Heart left ventricle (tissue), 16 donors: ENCODE measurements at regions of chr17 and their contacts with region 1.

Region 1: DNA sequence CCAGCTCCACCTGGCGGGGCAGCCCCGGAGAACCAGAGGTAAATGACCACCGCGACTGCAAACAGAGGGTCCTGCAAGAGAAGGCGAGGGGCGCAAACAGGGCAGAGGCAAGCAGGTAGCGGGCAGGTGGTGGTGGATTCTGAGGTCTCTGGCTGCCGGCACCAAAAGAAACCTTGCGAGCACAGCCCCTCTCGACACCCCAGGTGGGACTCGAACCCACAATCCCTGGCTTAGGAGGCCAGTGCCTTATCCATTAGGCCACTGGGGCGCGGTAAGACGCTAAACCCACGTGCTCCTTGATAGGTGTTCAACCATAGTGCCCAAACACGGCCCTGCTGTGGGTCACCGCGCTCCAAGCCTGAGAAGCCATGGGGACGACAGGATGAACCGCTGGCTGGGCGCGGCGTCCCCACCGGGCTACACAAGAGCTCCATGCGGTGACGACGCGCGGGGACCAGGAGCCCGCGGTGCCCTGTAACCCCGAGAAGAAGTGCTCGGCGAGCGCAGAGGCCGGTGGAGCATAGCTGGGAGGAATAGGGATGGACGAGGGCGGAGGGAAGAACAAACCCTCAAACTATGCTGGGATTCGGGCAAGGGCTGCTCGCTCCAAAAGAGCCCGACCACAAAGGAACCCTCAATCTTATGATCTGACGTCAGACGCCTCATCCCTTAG is 12.4 kb downstream of the ATP5PD start:
- DNase-seq: peak; percentile 84 to 90 (median 88)
- ATAC-seq: peak; percentile 69 to 79 (median 75)
- H3K4me3 ChIP-seq: peak overlapping the region; percentile 47 to 83 (median 68)
- H3K27ac ChIP-seq: peak overlapping the region; percentile 69 to 96 (median 86)
- H3K4me1 ChIP-seq: peaks cover 0 to 50% (median 31%) of the 10 kb centered on the region in 12 donors
- H3K27me3 ChIP-seq: no peaks in the 10 kb centered on the region
- CTCF ChIP-seq: peak in 2 of 12 donors; percentile 6 to 15
- POLR2A ChIP-seq: no peak

Region 2: GRCh38 chr17:74815550-74816370 is 218.6 kb before region 1 on chr17:
- intact Hi-C with region 1: loop called in 1 of 10 experiments (anchors 10 kb)
- DNase-seq: no peak
- ATAC-seq: no peak
- H3K4me3 ChIP-seq: no peak overlapping the region
- H3K27ac ChIP-seq: no peak overlapping the region
- H3K4me1 ChIP-seq: peaks cover 0 to 35% (median 14%) of the 10 kb centered on the region in 12 donors
- H3K27me3 ChIP-seq: no peaks in the 10 kb centered on the region
- CTCF ChIP-seq: peak in 2 of 12 donors; percentile 5 to 8
- POLR2A ChIP-seq: no peak

Region 3: DNA sequence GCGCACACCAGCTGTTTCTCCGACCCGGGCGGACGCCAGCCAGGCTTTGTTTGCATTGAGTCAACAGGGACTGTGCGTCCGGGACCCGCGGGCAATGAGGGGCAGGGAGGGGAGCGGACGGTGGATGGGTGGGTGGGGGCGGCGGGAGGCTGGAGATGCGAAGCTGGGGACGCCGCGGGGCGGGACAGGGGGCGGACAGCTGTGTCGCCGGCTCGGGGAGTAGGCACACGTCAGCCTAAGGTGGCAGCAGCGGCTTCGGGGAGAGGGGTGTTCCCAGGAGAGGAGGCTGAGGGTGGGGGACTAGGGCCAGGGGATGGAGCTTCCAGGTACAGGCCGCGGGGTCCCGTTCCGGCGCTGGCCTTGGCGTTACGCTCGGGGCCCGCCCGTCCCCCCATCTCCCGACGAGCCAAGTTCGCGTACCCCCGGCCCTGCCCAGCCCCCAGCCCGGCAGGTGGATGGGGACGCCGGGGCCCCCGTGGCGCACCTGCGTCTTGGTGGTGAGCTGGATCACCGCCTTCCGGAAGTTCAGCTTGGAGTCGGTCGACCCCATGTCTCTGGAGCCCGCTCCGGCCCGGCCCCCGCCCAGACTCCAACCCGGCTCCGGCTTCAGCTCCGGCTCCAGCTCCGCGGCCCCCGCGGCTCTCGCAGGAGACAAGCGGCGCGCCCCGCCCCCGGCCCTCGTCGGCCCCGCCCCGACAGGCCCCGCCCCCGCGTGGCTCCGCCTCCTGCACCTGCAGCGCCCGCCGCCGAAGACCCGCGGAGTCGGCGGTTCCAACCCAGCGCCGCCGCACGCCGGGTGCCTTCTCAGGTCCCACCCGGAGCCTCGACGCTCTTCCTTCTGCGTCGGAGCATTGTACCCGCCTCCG is 62.0 kb before region 1 on chr17 and contains the start of gene HID1:
- intact Hi-C with region 1: loop called in 1 of 10 experiments (anchors 10 kb)
- DNase-seq: peak; percentile 47 to 87 (median 66)
- ATAC-seq: peak in 3 of 4 donors; percentile 53 to 80 (median 71)
- H3K4me3 ChIP-seq: peak within 1 kb of the TSS; percentile 69 to 95 (median 76)
- H3K27ac ChIP-seq: peak within 1 kb of the TSS; percentile 52 to 81 (median 70)
- H3K4me1 ChIP-seq: peaks cover 0 to 26% (median 12%) of the 10 kb centered on the region in 12 donors
- H3K27me3 ChIP-seq: peaks cover 0 to 25% (median 0%) of the 10 kb centered on the region in 9 donors
- CTCF ChIP-seq: no peak
- POLR2A ChIP-seq: peak in 1 of 2 donors; percentile 20
- total RNA-seq, gene HID1: 5.7 to 15.7 (median 9.8) TPM

Region 4: GRCh38 chr17:74981979-74982662 is 52.3 kb before region 1 on chr17:
- intact Hi-C with region 1: loop called in 5 of 10 experiments (anchors 5 to 10 kb)
- DNase-seq: peak; percentile 76 to 90 (median 84)
- ATAC-seq: peak; percentile 86 to 95 (median 94)
- H3K4me3 ChIP-seq: peak overlapping the region; percentile 45 to 94 (median 68)
- H3K27ac ChIP-seq: peak overlapping the region; percentile 83 to 95 (median 90)
- H3K4me1 ChIP-seq: peaks cover 6 to 27% (median 20%) of the 10 kb centered on the region in 12 donors
- H3K27me3 ChIP-seq: peaks cover 0 to 12% (median 0%) of the 10 kb centered on the region in 9 donors
- CTCF ChIP-seq: peak in 5 of 12 donors; percentile 7 to 29 (median 23)
- POLR2A ChIP-seq: peak in 1 of 2 donors; percentile 77

Region 5: DNA sequence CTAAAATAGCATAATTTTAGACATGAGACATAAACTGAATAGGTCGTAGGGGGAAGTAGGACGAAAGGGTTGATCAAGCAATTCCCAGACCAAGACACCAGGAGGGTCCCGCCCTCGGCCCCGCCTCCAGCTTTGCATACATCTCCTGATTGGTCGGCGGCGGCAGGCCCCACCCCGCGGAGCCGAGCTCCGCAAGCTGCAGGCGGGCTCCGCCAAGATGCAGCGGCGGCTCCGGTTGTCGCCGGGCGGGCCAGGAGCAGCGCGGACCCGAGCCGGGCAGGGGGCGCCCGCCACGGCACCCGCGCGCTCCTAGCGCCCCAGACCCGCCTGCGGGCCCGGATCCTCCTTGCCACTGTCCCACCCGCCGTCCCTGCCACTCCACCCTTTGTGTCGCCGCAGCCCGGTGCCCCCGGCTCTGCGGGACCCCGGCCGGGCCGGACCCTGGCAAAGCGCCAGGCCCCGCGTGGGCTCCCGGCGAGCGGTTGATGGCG is 46.9 kb before region 1 on chr17 and contains the start of gene CDR2L:
- intact Hi-C with region 1: loop called in 5 of 10 experiments (anchors 2 to 10 kb)
- DNase-seq: peak; percentile 97 to 99 (median 97)
- ATAC-seq: peak; percentile 87 to 95 (median 91)
- H3K4me3 ChIP-seq: peak within 1 kb of the TSS; percentile 63 to 92 (median 84)
- H3K27ac ChIP-seq: peak within 1 kb of the TSS; percentile 92 to 99 (median 96)
- H3K4me1 ChIP-seq: peaks cover 3 to 48% (median 29%) of the 10 kb centered on the region in 12 donors
- H3K27me3 ChIP-seq: no peaks in the 10 kb centered on the region
- CTCF ChIP-seq: peak in 1 of 12 donors; percentile 5
- POLR2A ChIP-seq: peak; percentile 96 to 100
- total RNA-seq, gene CDR2L: 13.0 to 56.4 (median 18.1) TPM

Region 6: DNA sequence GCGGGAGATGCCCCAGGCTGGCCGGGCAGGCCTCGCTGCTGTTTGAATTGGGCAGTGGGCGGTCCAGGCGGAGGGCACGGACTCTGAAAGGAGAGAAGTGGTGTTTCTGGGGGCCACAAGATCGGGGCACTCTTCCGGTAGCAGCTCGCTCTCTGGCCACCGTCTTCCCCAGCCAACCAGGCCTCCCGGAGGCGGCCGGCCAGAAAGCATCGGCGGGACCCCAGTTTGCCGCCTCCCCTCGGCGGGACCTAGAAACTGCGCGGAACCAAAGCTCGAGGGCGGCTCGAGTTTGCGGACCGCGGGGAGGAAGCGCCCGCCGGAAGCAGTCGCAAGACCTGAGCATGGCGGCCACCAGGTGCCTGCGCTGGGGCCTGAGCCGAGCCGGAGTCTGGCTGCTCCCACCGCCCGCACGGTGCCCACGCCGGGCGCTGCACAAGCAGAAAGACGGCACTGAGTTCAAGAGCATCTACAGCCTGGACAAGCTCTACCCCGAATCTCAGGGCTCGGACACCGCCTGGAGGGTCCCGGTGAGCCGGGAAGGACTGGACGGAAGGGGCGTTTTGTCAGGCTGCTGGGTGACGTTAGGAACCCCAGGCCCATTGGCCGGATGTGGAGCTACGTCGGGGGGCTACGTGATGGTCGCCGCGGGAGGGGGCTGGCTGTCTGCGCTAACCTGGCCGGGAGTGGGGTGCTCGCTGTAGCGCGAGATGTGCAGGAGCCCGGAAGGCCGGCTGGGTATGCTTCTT is 21.9 kb before region 1 on chr17 and contains the start of gene MRPL58:
- intact Hi-C with region 1: loop called in 3 of 10 experiments (anchors 2 kb)
- DNase-seq: peak; percentile 83 to 90 (median 87)
- ATAC-seq: peak; percentile 76 to 93 (median 91)
- H3K4me3 ChIP-seq: peak within 1 kb of the TSS; percentile 68 to 96 (median 89)
- H3K27ac ChIP-seq: peak within 1 kb of the TSS; percentile 52 to 96 (median 90)
- H3K4me1 ChIP-seq: peaks cover 0 to 34% (median 22%) of the 10 kb centered on the region in 12 donors
- H3K27me3 ChIP-seq: no peaks in the 10 kb centered on the region
- CTCF ChIP-seq: peak; percentile 37 to 76 (median 64)
- POLR2A ChIP-seq: no peak
- total RNA-seq, gene MRPL58: 41.0 to 89.4 (median 55.8) TPM

Region 7: DNA sequence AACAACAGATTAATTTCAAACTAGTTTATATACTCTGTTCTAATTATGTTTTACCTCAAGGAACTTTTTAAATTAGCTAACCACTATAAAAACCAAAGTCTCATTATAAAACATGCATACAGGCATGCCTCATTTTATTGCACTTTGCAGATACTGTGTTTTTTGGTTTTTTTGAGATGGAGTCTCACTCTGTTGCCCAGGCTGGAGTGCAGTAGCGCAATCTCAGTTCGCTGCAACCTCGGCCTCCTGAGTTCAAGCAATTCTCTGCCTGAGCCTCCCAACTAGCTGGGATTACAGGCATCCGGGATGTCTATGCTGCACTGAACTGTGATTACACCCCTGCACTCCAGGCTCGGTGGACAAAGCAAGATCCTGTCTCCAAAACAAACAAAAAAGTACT is 128.7 kb after region 1 on chr17:
- intact Hi-C with region 1: no loop called
- DNase-seq: no peak
- ATAC-seq: no peak
- H3K4me3 ChIP-seq: no peak overlapping the region
- H3K27ac ChIP-seq: no peak overlapping the region
- H3K4me1 ChIP-seq: no peaks in the 10 kb centered on the region
- H3K27me3 ChIP-seq: no peaks in the 10 kb centered on the region
- CTCF ChIP-seq: no peak
- POLR2A ChIP-seq: no peak

Region 8: DNA sequence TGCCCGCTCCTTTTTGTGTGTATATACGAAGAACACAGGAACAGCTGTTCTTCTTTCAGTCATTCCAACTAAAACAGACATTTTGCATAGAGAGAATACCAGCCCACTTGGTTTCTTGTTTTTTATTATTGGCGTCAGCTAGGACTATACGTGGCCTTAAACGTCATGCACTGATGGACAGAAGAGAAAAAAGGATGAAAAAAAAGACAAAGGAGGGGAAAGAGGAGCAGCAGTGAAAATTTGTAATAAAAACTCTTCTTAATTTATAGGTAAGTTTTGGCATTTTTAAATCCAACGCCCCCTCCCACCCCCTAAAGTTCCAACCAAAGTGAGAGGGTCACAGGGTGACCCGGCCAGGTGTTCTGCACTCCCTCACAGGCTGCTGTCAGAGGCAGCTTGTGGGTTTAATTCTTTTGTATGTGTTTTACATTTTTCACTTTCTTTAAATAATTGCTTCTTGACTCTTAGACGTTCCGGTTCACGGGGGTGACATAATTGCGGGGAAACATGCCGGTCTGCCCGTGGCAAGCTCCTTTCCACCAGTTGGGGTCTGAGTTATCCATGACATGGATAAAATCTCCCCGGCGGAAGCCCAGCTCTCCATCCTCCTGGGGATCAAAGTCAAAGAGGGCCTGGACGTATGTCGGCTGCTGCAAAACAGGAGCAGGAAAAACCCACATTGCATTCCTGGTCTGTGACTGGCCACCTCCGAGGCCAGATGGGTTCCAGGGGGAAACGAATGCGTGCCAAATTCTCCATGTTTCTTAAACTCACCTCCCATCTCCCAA is 285.7 kb after region 1 on chr17:
- intact Hi-C with region 1: no loop called
- DNase-seq: no peak
- ATAC-seq: no peak
- H3K4me3 ChIP-seq: no peak overlapping the region
- H3K27ac ChIP-seq: peak overlapping the region in 1 of 12 donors; percentile 95
- H3K4me1 ChIP-seq: peaks cover 0 to 59% (median 2%) of the 10 kb centered on the region in 12 donors
- H3K27me3 ChIP-seq: no peaks in the 10 kb centered on the region
- CTCF ChIP-seq: no peak
- POLR2A ChIP-seq: no peak